ENCODE measurements at regions of chr22 and their contacts with region 1.

Region 1: GRCh38 chr22:46116491-46116958 is 33.8 kb upstream of the PPARA start:
- DNase-seq: peak; percentile 85
- ATAC-seq: peak; percentile 96
- H3K4me3 Mint-ChIP-seq: no peak overlapping the region
- H3K27ac Mint-ChIP-seq: no peak overlapping the region
- H3K4me1 Mint-ChIP-seq: no peaks in the 10 kb centered on the region
- H3K27me3 Mint-ChIP-seq: peaks cover 2% of the 10 kb centered on the region
- CTCF ChIP-seq: no peak

Region 2: GRCh38 chr22:45577746-45578523 is 538.6 kb before region 1 on chr22:
- CTCF ChIA-PET with region 1: interaction called, 3 read pairs
- POLR2A ChIA-PET with region 1: no interaction called
- intact Hi-C with region 1: loop called (anchors 2 kb)
- DNase-seq: peak; percentile 64
- ATAC-seq: peak; percentile 71
- H3K4me3 Mint-ChIP-seq: no peak overlapping the region
- H3K27ac Mint-ChIP-seq: no peak overlapping the region
- H3K4me1 Mint-ChIP-seq: peaks cover 4% of the 10 kb centered on the region
- H3K27me3 Mint-ChIP-seq: peaks cover 17% of the 10 kb centered on the region
- CTCF ChIP-seq: peak; percentile 45

Region 3: GRCh38 chr22:45863981-45864751 is 252.4 kb before region 1 on chr22:
- CTCF ChIA-PET with region 1: interaction called, 6 read pairs
- POLR2A ChIA-PET with region 1: no interaction called
- intact Hi-C with region 1: loop called (anchors 1 kb)
- DNase-seq: peak; percentile 74
- ATAC-seq: peak; percentile 91
- H3K4me3 Mint-ChIP-seq: no peak overlapping the region
- H3K27ac Mint-ChIP-seq: no peak overlapping the region
- H3K4me1 Mint-ChIP-seq: peaks cover 4% of the 10 kb centered on the region
- H3K27me3 Mint-ChIP-seq: peaks cover 37% of the 10 kb centered on the region
- CTCF ChIP-seq: peak; percentile 89

Region 4: GRCh38 chr22:45948081-45948648 is 168.4 kb before region 1 on chr22:
- CTCF ChIA-PET with region 1: no interaction called
- POLR2A ChIA-PET with region 1: no interaction called
- intact Hi-C with region 1: no loop called
- DNase-seq: peak; percentile 52
- ATAC-seq: peak; percentile 89
- H3K4me3 Mint-ChIP-seq: peak overlapping the region; percentile 32
- H3K27ac Mint-ChIP-seq: no peak overlapping the region
- H3K4me1 Mint-ChIP-seq: peaks cover 32% of the 10 kb centered on the region
- H3K27me3 Mint-ChIP-seq: peaks cover 4% of the 10 kb centered on the region
- CTCF ChIP-seq: no peak

Region 5: GRCh38 chr22:46006379-46007002 is 110.0 kb before region 1 on chr22:
- CTCF ChIA-PET with region 1: interaction called, 153 read pairs
- POLR2A ChIA-PET with region 1: interaction called, 31 read pairs
- intact Hi-C with region 1: loop called (anchors 1 kb)
- DNase-seq: peak; percentile 85
- ATAC-seq: peak; percentile 84
- H3K4me3 Mint-ChIP-seq: no peak overlapping the region
- H3K27ac Mint-ChIP-seq: no peak overlapping the region
- H3K4me1 Mint-ChIP-seq: peaks cover 12% of the 10 kb centered on the region
- H3K27me3 Mint-ChIP-seq: no peaks in the 10 kb centered on the region
- CTCF ChIP-seq: peak; percentile 80

Region 6: GRCh38 chr22:46071451-46072109 is 44.9 kb before region 1 on chr22:
- CTCF ChIA-PET with region 1: interaction called, 3 read pairs
- POLR2A ChIA-PET with region 1: interaction called, 10 read pairs
- intact Hi-C with region 1: no loop called
- DNase-seq: peak; percentile 61
- ATAC-seq: peak; percentile 22
- H3K4me3 Mint-ChIP-seq: peak overlapping the region; percentile 87
- H3K27ac Mint-ChIP-seq: peak overlapping the region; percentile 84
- H3K4me1 Mint-ChIP-seq: peaks cover 27% of the 10 kb centered on the region
- H3K27me3 Mint-ChIP-seq: no peaks in the 10 kb centered on the region
- CTCF ChIP-seq: no peak